Activated CD4-positive, alpha-beta memory T cell treated with anti-CD3 and anti-CD28 coated beads for 36 hours (primary cell): ENCODE measurements at regions of chr5 and their contacts with region 1.

Region 1: GRCh38 chr5:40879163-40879942 is 29.9 kb upstream of the C7 start:
- DNase-seq: no peak
- H3K4me3 Mint-ChIP-seq: no peak overlapping the region
- H3K27ac Mint-ChIP-seq: no peak overlapping the region
- H3K4me1 Mint-ChIP-seq: peaks cover 4% of the 10 kb centered on the region
- H3K27me3 Mint-ChIP-seq: peaks cover 1% of the 10 kb centered on the region

Region 2: GRCh38 chr5:39578887-39579497 is 1300.4 kb before region 1 on chr5:
- CTCF ChIA-PET with region 1: no interaction called
- POLR2A ChIA-PET with region 1: no interaction called
- intact Hi-C with region 1: loop called (anchors 2 kb)
- DNase-seq: no peak
- H3K4me3 Mint-ChIP-seq: no peak overlapping the region
- H3K27ac Mint-ChIP-seq: no peak overlapping the region
- H3K4me1 Mint-ChIP-seq: peaks cover 6% of the 10 kb centered on the region
- H3K27me3 Mint-ChIP-seq: no peaks in the 10 kb centered on the region

Region 3: GRCh38 chr5:39948867-39949468 is 930.4 kb before region 1 on chr5:
- CTCF ChIA-PET with region 1: no interaction called
- POLR2A ChIA-PET with region 1: no interaction called
- intact Hi-C with region 1: loop called (anchors 1 kb)
- DNase-seq: peak; percentile 54
- H3K4me3 Mint-ChIP-seq: no peak overlapping the region
- H3K27ac Mint-ChIP-seq: peak overlapping the region; percentile 4
- H3K4me1 Mint-ChIP-seq: peaks cover 3% of the 10 kb centered on the region
- H3K27me3 Mint-ChIP-seq: no peaks in the 10 kb centered on the region

Region 4: GRCh38 chr5:40736103-40736875 is 143.1 kb before region 1 on chr5:
- CTCF ChIA-PET with region 1: interaction called, 4 read pairs
- POLR2A ChIA-PET with region 1: no interaction called
- intact Hi-C with region 1: loop called (anchors 5 kb)
- DNase-seq: no peak
- H3K4me3 Mint-ChIP-seq: no peak overlapping the region
- H3K27ac Mint-ChIP-seq: no peak overlapping the region
- H3K4me1 Mint-ChIP-seq: peaks cover 23% of the 10 kb centered on the region
- H3K27me3 Mint-ChIP-seq: no peaks in the 10 kb centered on the region

Region 5: GRCh38 chr5:40841068-40841805 is 38.1 kb before region 1 on chr5 and contains the start of gene CARD6:
- CTCF ChIA-PET with region 1: interaction called, 3 read pairs
- POLR2A ChIA-PET with region 1: no interaction called
- intact Hi-C with region 1: loop called (anchors 5 kb)
- DNase-seq: no peak
- H3K4me3 Mint-ChIP-seq: peak within 1 kb of the TSS; percentile 80
- H3K27ac Mint-ChIP-seq: peak within 1 kb of the TSS; percentile 71
- H3K4me1 Mint-ChIP-seq: peaks cover 21% of the 10 kb centered on the region
- H3K27me3 Mint-ChIP-seq: no peaks in the 10 kb centered on the region
- total RNA-seq, gene CARD6: 1.4 to 1.7 TPM